Activated CD8-positive, alpha-beta T cell treated with anti-CD3 and anti-CD28 coated beads for 36 hours (primary cell): ENCODE measurements at regions of chr9 and their contacts with region 1.

Region 1: DNA sequence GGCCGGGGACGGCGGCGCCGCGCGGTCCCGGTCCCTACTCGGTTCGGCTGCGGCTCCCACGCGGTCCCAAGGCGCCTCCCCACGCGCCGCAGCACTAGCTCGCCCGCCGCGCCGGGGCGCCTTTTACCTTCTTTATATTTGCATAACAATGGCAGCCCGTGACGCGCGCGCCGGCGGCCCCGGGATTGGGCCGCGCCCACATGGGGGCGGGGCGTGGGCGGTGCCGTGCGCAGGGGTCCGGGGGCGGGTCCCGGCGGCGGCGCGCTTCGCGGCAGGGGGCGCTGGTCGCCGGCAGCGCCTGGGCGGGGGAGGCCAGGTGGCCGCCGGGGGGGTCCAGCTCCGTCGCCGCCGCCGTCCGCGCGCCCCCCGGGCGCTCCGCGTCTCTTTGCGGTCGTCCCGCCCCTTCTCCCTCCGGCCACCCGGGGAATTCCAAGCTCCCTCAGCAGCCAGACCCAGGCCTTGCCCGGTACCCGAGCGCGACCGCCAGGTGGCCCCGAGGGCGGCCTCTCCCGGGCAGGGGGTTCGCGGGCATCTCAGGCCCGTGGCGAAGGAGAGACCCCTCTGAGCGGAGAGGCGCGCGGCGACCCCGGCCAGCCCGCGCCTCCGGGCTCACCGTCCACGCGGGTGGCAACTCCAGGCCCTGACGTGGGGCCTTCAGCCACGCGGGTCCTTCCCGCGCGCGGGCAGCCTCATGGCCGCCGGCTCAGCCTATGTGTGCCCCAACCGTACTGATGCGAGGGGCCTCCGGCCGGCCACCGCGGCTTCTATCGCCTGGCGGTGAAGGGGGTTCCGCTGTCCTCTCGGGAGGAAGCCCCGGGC is at the start of gene NRARP:
- DNase-seq: peak; percentile 95
- ATAC-seq: peak; percentile 73
- H3K4me3 Mint-ChIP-seq: peak within 1 kb of the TSS; percentile 73
- H3K27ac Mint-ChIP-seq: no peak within 1 kb of the TSS
- H3K4me1 Mint-ChIP-seq: peaks cover 15% of the 10 kb centered on the region
- H3K27me3 Mint-ChIP-seq: peaks cover 15% of the 10 kb centered on the region
- CTCF ChIP-seq: peak; percentile 75
- total RNA-seq, gene NRARP: 3.3 to 4.4 TPM

Region 2: DNA sequence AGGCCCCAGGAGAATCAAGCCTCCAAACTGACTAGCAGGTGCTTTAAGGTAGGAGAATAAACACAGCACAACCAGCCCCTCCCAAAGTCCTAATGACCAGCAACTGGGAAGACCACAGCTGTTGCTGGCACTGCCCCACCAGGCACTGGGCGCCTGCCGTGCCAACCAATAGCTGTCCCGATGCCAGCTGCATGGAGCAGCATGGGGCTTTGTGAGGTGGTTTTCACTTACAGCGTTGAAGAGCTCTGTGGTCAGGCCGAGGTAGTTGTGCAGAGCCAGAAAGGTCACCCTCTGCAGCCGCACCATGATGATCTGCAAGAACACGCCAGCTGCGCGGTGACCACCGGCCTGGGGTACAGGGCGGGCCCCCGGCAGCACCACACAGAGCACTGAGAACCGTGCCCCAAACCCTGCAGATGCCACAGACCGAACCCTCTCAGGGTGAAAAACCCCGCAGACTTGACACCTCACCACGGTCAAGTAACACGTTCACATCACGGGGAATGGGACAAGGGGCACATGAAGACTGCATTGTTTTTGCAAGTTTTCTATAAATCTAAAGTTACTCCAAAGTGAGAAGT is 219.1 kb after region 1 on chr9:
- CTCF ChIA-PET with region 1: interaction called, 4 read pairs
- POLR2A ChIA-PET with region 1: no interaction called
- intact Hi-C with region 1: loop called (anchors 10 kb)
- DNase-seq: no peak
- ATAC-seq: no peak
- H3K4me3 Mint-ChIP-seq: no peak overlapping the region
- H3K27ac Mint-ChIP-seq: no peak overlapping the region
- H3K4me1 Mint-ChIP-seq: peaks cover 3% of the 10 kb centered on the region
- H3K27me3 Mint-ChIP-seq: no peaks in the 10 kb centered on the region
- CTCF ChIP-seq: no peak